ENCODE measurements at regions of chr17 and their contacts with region 1.

Region 1: DNA sequence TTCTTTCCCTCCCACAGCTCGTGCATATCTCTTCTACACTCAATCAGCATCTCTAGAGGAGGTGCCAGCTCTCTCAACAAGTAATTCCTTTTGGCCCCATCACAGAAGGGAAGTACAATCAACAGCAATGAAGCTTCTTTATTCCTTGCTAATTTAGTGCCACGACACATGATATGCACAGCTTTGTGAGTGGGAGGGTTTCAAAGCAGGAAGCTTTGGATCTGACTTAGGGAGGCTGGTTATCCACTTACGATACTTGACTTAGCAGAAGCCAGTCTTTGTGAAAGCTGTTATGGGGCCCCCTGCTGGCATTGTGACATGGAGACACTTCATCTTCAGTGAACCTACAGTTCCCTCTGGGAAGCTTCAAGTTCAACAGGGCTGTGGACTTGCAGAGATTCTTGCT is 81.0 kb downstream of the TMEM100 start:
- DNase-seq: peak; percentile 90
- H3K4me3 ChIP-seq: no peak overlapping the region
- H3K27ac ChIP-seq: no peak overlapping the region
- H3K4me1 ChIP-seq: peaks cover 0 to 7% (median 5%) of the 10 kb centered on the region in 4 donors
- H3K27me3 ChIP-seq: no peaks in the 10 kb centered on the region
- CTCF ChIP-seq: peak; percentile 33 to 58 (median 38)
- EP300 ChIP-seq: no peak
- POLR2A ChIP-seq: no peak

Region 2: DNA sequence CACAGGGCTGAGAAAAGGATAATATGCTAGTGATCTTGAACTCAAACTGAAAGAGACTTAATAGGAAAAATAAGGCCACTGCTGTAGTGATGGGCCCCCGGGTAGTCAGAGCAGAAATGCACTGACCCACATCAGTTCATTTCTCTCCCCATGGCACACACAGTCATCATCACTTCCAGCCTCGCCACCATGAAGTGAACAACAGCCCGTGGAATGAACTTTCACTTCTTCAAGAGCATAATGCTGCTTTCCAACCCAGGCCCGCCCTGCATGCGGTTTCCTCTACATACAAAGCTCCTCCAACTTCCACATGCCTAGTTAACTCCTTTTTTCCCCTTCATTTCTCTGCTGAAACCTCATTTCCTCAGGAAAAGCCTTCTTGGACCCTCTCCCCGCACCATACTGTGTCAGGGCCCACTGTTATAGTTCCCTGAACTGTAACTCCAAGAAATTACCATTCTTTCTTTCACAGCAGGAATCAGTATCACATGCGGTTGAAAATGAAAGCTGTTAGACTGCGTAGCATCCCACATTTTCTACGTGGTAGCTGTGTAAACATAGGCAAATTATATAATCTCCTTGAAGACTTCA is 64.6 kb before region 1 on chr17:
- intact Hi-C with region 1: no loop called
- DNase-seq: peak; percentile 77
- H3K4me3 ChIP-seq: peak overlapping the region; percentile 8 to 37 (median 36)
- H3K27ac ChIP-seq: peak overlapping the region; percentile 82 to 87 (median 84)
- H3K4me1 ChIP-seq: peaks cover 0 to 23% (median 16%) of the 10 kb centered on the region in 4 donors
- H3K27me3 ChIP-seq: no peaks in the 10 kb centered on the region
- CTCF ChIP-seq: no peak
- EP300 ChIP-seq: no peak
- POLR2A ChIP-seq: no peak

Region 3: DNA sequence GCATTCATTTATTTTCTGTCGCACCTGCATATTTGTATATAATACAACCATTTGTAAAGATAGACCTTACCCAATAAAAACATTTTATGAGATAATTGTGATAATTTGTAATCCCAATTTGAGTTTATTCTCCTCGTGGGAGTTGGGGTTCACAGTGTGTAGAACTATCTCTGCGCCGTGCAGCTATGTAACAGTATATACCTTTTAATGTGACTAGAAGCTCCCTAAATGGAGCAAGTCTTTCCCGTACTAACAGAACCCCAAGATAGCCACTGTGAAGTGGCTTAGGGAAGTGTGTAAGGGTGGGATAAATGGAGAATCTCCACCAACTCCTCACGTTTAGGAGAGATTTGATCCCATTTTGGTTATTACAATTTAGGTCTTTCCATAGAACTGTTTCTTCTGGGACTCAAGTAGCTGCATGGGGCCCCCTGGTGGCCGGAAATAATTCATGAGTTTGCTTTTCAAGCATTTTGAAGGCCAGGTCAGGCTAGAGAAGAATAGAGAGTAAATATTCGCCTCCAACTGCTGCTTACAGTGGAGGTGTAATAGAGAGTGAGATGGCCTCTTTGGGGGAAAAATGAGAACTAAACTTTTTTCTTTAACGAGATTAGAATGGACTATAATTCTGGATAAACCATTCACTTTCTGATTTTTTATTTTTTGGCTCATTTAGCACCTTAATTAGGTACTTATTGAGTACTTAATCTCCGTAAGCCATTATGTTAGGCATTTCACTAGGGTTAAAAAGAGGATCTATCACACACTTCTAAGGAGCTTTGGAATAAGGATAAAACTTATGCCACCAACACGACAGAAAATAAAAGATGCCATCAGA is 76.4 kb after region 1 on chr17:
- intact Hi-C with region 1: loop called (anchors 5 kb)
- DNase-seq: peak; percentile 92
- H3K4me3 ChIP-seq: no peak overlapping the region
- H3K27ac ChIP-seq: no peak overlapping the region
- H3K4me1 ChIP-seq: peaks cover 0 to 29% (median 25%) of the 10 kb centered on the region in 4 donors
- H3K27me3 ChIP-seq: no peaks in the 10 kb centered on the region
- CTCF ChIP-seq: peak; percentile 58 to 73 (median 71)
- EP300 ChIP-seq: no peak
- POLR2A ChIP-seq: no peak

Region 4: DNA sequence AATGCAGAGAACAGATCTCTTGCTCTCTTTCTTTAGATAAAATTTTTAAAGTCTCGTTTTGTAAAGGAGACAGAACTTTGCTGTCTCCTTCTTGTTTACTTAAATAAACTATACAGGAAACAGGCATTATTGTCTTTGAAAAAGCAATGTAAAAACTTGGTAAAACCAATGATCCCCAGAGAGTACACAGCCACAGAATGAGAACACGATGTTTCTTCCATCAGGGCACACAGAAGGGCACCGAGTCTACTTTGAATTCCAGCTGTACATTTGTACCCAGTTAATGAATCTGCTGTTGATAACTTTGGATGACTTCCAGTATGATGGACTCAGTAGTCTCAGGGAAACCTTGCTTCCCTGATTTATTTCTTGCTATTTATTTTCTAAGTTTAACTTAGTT is 89.1 kb after region 1 on chr17:
- intact Hi-C with region 1: no loop called
- DNase-seq: peak; percentile 59
- H3K4me3 ChIP-seq: peak overlapping the region in 3 of 4 donors; percentile 13 to 19 (median 17)
- H3K27ac ChIP-seq: peak overlapping the region; percentile 77 to 85 (median 80)
- H3K4me1 ChIP-seq: peaks cover 0 to 92% (median 80%) of the 10 kb centered on the region in 4 donors
- H3K27me3 ChIP-seq: no peaks in the 10 kb centered on the region
- CTCF ChIP-seq: no peak
- EP300 ChIP-seq: peak in 3 of 4 donors; percentile 19 to 88 (median 65)
- POLR2A ChIP-seq: no peak

Measured in sigmoid colon (tissue), 7 donors.